T-cell (primary cell): ENCODE measurements at regions of chr12 and their contacts with region 1.

Region 1: GRCh38 chr12:48903982-48904411 is 21.3 kb downstream of the FKBP11 start:
- DNase-seq: peak; percentile 69 to 91 (median 82)
- ATAC-seq: peak; percentile 95 to 100 (median 98)
- H3K4me3 ChIP-seq: peak overlapping the region; percentile 22 to 48
- H3K4me3 Mint-ChIP-seq: peak overlapping the region; percentile 56 to 70 (median 70)
- H3K27ac ChIP-seq: no peak overlapping the region
- H3K27ac Mint-ChIP-seq: peak overlapping the region in 1 of 2 donors; percentile 23
- H3K4me1 ChIP-seq: peaks cover 0 to 13% of the 10 kb centered on the region in 2 experiments
- H3K4me1 Mint-ChIP-seq: peaks cover 5 to 7% (median 6%) of the 10 kb centered on the region in 3 donors
- H3K27me3 ChIP-seq: peaks cover 0 to 4% of the 10 kb centered on the region in 2 experiments
- H3K27me3 Mint-ChIP-seq: no peaks in the 10 kb centered on the region

Region 2: DNA sequence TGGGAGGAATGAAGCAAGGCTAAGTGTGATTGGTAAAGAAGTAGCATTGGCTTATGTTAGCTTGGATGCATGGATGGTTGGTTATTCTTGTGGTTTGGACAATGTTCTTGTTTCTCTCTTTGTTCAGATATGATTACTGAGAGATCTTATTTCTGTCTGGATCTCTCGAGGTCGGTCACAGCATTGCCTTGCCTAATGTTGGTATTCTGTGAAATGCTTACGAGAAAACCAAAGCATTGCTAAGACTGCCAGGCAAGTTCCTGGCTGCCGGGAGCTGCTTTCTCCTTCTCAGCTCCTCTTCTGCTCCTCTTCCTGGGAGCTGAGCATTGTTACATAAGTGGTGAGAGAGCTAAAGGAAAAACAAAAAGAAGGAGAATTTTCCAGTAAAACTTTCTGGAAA is 30.9 kb before region 1 on chr12:
- CTCF ChIA-PET with region 1: no interaction called
- POLR2A ChIA-PET with region 1: no interaction called
- DNase-seq: no peak
- ATAC-seq: no peak
- H3K4me3 ChIP-seq: no peak overlapping the region
- H3K4me3 Mint-ChIP-seq: no peak overlapping the region
- H3K27ac ChIP-seq: no peak overlapping the region
- H3K27ac Mint-ChIP-seq: peak overlapping the region in 1 of 2 donors; percentile 36
- H3K4me1 ChIP-seq: no peaks in the 10 kb centered on the region
- H3K4me1 Mint-ChIP-seq: no peaks in the 10 kb centered on the region
- H3K27me3 ChIP-seq: no peaks in the 10 kb centered on the region
- H3K27me3 Mint-ChIP-seq: peaks cover 0 to under 1% of the 10 kb centered on the region in 2 donors

Region 3: DNA sequence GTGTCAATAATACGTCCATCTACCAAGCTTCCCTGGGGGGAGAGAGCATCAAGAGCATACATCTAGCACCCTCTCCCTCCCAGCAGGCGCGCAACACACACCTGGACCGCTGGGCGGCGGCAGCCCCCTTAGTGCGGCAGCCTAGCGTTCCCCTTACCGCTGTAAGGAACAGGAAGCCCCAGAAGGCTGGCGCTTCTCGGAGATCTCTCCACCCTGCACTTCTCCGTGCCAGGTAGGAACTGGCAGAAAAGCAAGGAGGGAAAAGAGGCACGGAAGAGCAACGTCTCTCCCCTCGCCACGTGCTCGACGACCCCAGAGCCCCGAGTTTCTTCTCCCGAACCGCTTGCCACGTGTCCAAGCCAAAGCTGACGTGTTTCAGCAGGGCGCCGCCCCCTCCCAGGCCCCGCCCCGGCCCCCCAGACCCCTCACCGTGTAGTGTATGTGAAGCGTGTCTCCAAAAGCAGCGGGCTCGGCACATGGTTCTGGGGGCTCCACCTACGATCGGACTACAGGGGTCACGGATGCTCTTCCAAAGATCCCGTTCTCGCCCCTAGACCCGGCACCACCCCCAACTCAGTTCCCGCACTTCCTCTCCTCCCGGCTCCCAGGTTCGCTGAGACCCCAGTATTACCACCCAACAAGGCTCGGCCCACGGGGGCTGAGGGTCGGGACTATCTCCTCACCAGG is 20.8 kb after region 1 on chr12:
- CTCF ChIA-PET with region 1: interaction called, 4 to 22 read pairs
- POLR2A ChIA-PET with region 1: interaction called in 1 of 2 experiments, 4 read pairs
- DNase-seq: peak; percentile 64 to 87 (median 79)
- ATAC-seq: peak; percentile 78 to 83 (median 80)
- H3K4me3 ChIP-seq: peak overlapping the region; percentile 93 to 100
- H3K4me3 Mint-ChIP-seq: peak overlapping the region; percentile 88 to 96 (median 95)
- H3K27ac ChIP-seq: peak overlapping the region; percentile 97
- H3K27ac Mint-ChIP-seq: peak overlapping the region; percentile 90 to 92
- H3K4me1 ChIP-seq: peaks cover 8 to 44% of the 10 kb centered on the region in 2 experiments
- H3K4me1 Mint-ChIP-seq: peaks cover 36 to 58% (median 56%) of the 10 kb centered on the region in 3 donors
- H3K27me3 ChIP-seq: no peaks in the 10 kb centered on the region
- H3K27me3 Mint-ChIP-seq: no peaks in the 10 kb centered on the region

Region 4: DNA sequence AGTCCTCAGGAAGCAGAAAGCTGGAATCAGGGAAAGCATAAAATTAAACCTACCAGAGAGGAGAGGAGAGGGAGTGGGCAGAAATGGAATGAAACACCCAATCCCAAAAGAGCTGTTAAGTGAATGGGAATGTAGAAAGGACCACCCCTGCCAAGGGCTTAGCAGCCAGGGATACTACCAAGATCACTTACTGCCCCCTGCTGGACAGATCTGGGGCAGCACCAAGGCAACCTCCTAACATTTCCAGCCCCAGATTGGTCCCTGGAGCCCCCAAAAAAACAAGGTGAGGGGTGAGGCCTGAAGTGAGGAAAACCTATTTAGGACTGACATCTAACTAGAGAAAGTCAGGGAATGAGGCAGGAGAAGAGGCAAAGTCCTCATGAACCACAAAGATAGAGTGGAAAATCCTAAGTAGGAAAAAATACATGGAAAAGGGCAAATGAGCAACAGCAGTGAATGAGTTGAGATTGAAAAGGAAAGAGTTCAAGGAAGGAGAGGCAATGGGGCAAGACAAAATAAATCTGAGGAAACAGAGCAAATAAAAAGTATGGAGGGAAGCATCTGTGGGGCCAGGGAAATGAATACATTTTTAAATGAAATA is 32.5 kb after region 1 on chr12:
- CTCF ChIA-PET with region 1: interaction called, 7 to 14 read pairs
- POLR2A ChIA-PET with region 1: interaction called in 1 of 2 experiments, 3 read pairs
- DNase-seq: peak; percentile 54 to 91 (median 81)
- ATAC-seq: peak; percentile 56 to 75 (median 65)
- H3K4me3 ChIP-seq: no peak overlapping the region
- H3K4me3 Mint-ChIP-seq: no peak overlapping the region
- H3K27ac ChIP-seq: no peak overlapping the region
- H3K27ac Mint-ChIP-seq: peak overlapping the region; percentile 44 to 76
- H3K4me1 ChIP-seq: peaks cover 2 to 45% of the 10 kb centered on the region in 2 experiments
- H3K4me1 Mint-ChIP-seq: peaks cover 29 to 39% (median 35%) of the 10 kb centered on the region in 3 donors
- H3K27me3 ChIP-seq: no peaks in the 10 kb centered on the region
- H3K27me3 Mint-ChIP-seq: no peaks in the 10 kb centered on the region

Region 5: GRCh38 chr12:48988030-48988649 is 84.1 kb after region 1 on chr12:
- CTCF ChIA-PET with region 1: interaction called, 4 to 16 read pairs
- POLR2A ChIA-PET with region 1: interaction called in 1 of 2 experiments, 3 read pairs
- DNase-seq: peak in 28 of 35 experiments; percentile 30 to 85 (median 64)
- ATAC-seq: peak; percentile 75 to 84 (median 81)
- H3K4me3 ChIP-seq: no peak overlapping the region
- H3K4me3 Mint-ChIP-seq: no peak overlapping the region
- H3K27ac ChIP-seq: no peak overlapping the region
- H3K27ac Mint-ChIP-seq: peak overlapping the region in 1 of 2 donors; percentile 12
- H3K4me1 ChIP-seq: peaks cover 0 to 5% of the 10 kb centered on the region in 2 experiments
- H3K4me1 Mint-ChIP-seq: peaks cover 7 to 12% (median 7%) of the 10 kb centered on the region in 3 donors
- H3K27me3 ChIP-seq: peaks cover 13 to 43% of the 10 kb centered on the region in 2 experiments
- H3K27me3 Mint-ChIP-seq: peaks cover 26 to 33% of the 10 kb centered on the region in 2 donors

Region 6: DNA sequence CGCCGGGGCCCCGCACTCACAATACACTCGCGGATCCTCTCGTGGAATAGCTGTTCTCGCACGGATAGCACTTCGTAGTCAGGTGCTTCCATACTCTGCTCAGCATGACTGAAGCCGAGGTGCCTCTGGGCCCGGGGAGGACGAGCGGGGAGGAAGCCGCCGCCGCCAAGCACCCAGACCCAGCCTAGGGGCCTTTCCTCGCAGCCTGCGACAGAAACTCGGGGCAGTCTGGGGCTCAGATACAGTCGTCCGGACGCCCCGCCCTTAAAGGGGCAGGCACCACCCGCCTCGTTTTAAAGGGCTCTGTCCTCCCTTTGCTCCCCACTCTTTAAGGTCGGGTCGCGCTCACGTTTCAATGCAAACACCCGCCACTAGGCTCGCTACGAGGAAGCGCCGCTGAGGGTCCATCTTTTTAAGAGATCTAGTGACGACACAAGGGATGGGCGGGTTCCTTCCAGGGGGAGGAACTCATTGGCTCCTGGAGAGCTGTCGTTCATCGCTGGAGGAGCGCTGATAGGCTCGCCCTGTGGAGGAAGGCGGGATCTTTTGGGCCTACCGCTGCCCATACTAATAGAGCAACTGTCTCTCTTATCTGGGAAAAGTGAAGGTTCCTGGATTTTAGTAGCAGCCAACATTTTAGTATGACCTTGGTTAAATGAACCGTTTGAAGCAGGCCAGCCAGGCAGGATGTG is 206.6 kb after region 1 on chr12 and contains the start of gene LMBR1L:
- CTCF ChIA-PET with region 1: no interaction called
- POLR2A ChIA-PET with region 1: interaction called in 1 of 2 experiments, 11 read pairs
- DNase-seq: peak; percentile 88 to 99 (median 97)
- ATAC-seq: peak; percentile 94 to 97 (median 96)
- H3K4me3 ChIP-seq: peak within 1 kb of the TSS; percentile 82 to 96
- H3K4me3 Mint-ChIP-seq: peak within 1 kb of the TSS; percentile 99
- H3K27ac ChIP-seq: peak within 1 kb of the TSS; percentile 90
- H3K27ac Mint-ChIP-seq: peak within 1 kb of the TSS; percentile 99
- H3K4me1 ChIP-seq: peaks cover 8 to 37% of the 10 kb centered on the region in 2 experiments
- H3K4me1 Mint-ChIP-seq: peaks cover 41 to 48% (median 46%) of the 10 kb centered on the region in 3 donors
- H3K27me3 ChIP-seq: peaks cover 0 to 2% of the 10 kb centered on the region in 2 experiments
- H3K27me3 Mint-ChIP-seq: no peaks in the 10 kb centered on the region
- total RNA-seq, gene LMBR1L: 159 to 302 (median 224) TPM

Region 7: DNA sequence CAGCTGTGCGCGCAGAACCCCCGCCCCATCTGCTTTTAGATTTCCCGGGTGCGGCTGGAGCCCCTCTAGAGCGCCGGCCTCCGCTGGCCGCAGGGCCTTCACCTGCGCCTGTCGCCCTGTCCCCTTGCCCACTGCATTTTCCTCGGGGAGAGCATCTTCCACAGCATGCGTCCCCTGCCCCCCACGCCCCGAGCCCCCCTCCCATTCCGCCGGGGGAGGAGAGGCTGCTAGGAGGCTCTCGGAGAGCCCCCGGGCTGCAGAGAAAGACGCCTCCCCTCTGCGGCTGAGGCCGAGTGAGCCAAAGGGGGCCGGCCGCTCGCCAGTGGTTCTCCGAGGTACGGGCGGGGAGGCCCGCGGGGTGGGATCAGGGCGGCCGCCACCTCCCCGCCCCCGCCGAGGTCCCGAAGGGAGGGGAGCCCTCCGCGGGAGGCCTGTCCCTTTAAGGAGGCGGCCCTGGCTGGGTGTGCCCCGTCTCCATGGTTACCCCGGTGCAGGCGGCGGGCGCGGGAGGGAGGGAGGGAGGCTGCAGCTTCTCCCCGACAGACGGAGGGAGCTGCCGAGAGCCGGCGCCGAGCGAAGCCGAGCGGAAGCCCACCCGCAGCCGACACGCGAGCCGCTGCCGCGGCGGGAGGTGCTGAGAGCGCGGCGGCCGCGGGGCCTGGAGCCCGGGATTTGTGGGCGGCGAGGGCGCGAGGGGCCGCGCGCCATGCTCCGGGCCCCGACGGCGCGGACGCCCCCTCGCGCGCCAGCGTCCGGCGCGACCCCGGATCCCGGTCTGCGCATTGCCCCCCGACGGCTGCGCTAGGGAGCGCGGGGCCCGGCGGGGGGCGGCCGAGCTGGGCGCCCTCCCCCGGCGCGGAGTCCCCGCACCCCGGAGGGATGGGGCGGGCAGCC is 634.8 kb after region 1 on chr12 and contains the start of gene KCNH3:
- CTCF ChIA-PET with region 1: no interaction called
- POLR2A ChIA-PET with region 1: no interaction called
- DNase-seq: peak; percentile 80 to 93 (median 91)
- ATAC-seq: peak; percentile 92 to 95 (median 94)
- H3K4me3 ChIP-seq: peak within 1 kb of the TSS; percentile 59 to 60
- H3K4me3 Mint-ChIP-seq: peak within 1 kb of the TSS; percentile 76 to 78 (median 77)
- H3K27ac ChIP-seq: no peak within 1 kb of the TSS
- H3K27ac Mint-ChIP-seq: peak within 1 kb of the TSS in 1 of 2 donors; percentile 34
- H3K4me1 ChIP-seq: peaks cover 6 to 35% of the 10 kb centered on the region in 2 experiments
- H3K4me1 Mint-ChIP-seq: peaks cover 23 to 33% (median 26%) of the 10 kb centered on the region in 3 donors
- H3K27me3 ChIP-seq: peaks cover 6 to 32% of the 10 kb centered on the region in 2 experiments
- H3K27me3 Mint-ChIP-seq: peaks cover 0 to 8% of the 10 kb centered on the region in 2 donors
- total RNA-seq, gene KCNH3: 3.4 to 8.0 (median 5.5) TPM